IMR-90 (cell line): ENCODE measurements at regions of chr10 and their contacts with region 1.

Region 1: DNA sequence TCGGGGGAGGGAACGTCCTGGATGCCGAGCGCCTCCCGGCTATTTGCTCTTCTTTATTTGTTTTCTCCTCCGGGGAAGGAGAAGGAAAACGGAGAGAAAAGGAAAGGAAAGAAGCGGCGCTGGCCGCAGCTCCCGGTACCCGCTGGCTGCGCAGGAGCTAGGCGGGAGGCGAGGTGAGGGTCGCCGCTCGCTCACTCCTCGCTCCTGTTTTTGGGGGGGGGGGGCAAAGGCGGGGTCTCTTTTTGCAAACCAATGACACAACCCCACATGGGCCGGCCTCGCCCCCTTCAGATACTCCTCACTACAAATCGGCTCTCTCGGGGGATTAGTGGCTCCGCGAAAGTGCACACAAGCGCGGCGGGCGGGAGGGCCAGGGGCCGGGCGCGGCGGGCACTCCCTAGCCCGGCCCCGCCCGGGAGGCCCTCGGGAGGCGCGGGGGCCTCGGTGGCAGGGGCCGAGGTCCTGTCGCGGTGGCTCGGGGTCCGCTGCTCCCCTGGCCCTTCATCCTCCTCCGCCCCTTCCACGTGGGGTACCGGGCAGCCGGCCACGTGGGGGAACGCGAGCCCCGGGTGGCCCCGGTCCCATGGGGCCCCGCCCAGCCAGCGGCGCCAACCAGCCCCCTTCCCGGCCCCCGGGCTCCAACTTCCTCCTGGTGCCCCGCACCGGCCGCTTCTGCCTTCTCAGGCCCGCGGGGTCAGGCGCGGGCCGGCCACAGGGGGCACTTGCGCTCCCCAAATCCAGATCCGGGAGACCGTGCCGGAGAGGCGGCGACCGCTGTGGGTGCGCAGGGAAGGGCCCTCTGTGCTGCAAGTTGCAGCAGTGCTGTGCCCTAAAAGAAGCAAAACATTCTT is 718 bp upstream of the CTBP2 start:
- DNase-seq: peak; percentile 85
- ATAC-seq: peak; percentile 74
- H3K4me3 ChIP-seq: peak overlapping the region; percentile 98
- H3K27ac ChIP-seq: peak overlapping the region; percentile 84
- H3K4me1 ChIP-seq: peaks cover 7% of the 10 kb centered on the region; the same call in 1 of the 2 replicates
- H3K27me3 ChIP-seq: no peaks in the 10 kb centered on the region
- CTCF ChIP-seq: peak; percentile 47
- POLR2A ChIP-seq: peak; percentile 75; the same call in 1 of the 2 replicates
- RAD21 ChIP-seq: peak; percentile 58

Region 2: GRCh38 chr10:124763267-124763666 is 397.8 kb before region 1 on chr10:
- CTCF ChIA-PET with region 1: no interaction called
- POLR2A ChIA-PET with region 1: no interaction called
- dilution Hi-C with region 1: no loop called
- in situ Hi-C with region 1: no loop called
- intact Hi-C with region 1: no loop called
- DNase-seq: peak; percentile 48
- ATAC-seq: peak; percentile 44
- H3K4me3 ChIP-seq: no peak overlapping the region
- H3K27ac ChIP-seq: no peak overlapping the region
- H3K4me1 ChIP-seq: peaks cover 2% of the 10 kb centered on the region
- H3K27me3 ChIP-seq: no peaks in the 10 kb centered on the region
- CTCF ChIP-seq: no peak
- POLR2A ChIP-seq: no peak
- RAD21 ChIP-seq: no peak

Region 3: DNA sequence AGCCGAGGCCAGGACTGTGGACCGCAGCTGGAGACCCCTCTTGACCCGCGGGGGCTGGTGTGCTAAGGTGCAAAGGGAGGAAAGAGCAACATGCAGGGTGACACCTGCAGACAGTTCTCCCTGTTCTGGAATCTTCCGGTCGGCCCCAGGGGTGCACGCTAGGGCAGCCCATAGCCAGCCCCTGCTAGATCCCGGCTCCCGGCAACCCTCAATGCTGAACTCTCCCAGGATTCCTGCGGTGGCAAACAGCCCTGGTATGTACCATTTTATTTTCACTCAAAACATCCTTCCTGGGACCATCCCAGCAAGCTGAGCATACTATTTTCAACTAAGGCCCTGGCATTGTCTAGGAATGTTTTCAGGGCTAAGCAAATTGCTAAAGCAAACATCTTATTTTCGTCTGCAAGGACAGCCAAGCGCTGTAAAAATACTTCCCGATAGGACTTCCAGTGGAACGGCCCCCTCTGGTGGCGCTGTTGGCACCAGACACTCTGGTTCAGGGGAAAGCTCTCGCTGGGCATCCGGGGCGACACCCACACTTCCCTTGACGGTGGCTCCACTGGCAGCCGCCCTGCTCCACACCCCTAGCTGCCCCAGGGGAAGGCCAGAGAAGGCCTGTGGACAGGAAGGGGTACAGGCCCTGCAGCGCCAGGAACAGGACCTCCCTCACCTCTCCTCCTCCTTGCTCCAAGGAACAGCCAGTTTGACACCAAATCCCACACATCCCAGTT is 100.1 kb before region 1 on chr10:
- CTCF ChIA-PET with region 1: no interaction called
- POLR2A ChIA-PET with region 1: no interaction called
- dilution Hi-C with region 1: no loop called
- in situ Hi-C with region 1: loop called (anchors 10 kb)
- intact Hi-C with region 1: no loop called
- DNase-seq: peak; percentile 80
- ATAC-seq: peak; percentile 58
- H3K4me3 ChIP-seq: no peak overlapping the region
- H3K27ac ChIP-seq: peak overlapping the region; percentile 13; the same call in 1 of the 2 replicates
- H3K4me1 ChIP-seq: peaks cover 50% of the 10 kb centered on the region
- H3K27me3 ChIP-seq: no peaks in the 10 kb centered on the region
- CTCF ChIP-seq: peak; percentile 88
- POLR2A ChIP-seq: no peak
- RAD21 ChIP-seq: peak; percentile 84

Region 4: GRCh38 chr10:125123476-125124114 is 37.5 kb before region 1 on chr10:
- CTCF ChIA-PET with region 1: no interaction called
- POLR2A ChIA-PET with region 1: no interaction called
- dilution Hi-C with region 1: no loop called
- in situ Hi-C with region 1: no loop called
- intact Hi-C with region 1: no loop called
- DNase-seq: peak; percentile 69
- ATAC-seq: peak; percentile 79
- H3K4me3 ChIP-seq: no peak overlapping the region
- H3K27ac ChIP-seq: peak overlapping the region; percentile 64
- H3K4me1 ChIP-seq: peaks cover 33% of the 10 kb centered on the region
- H3K27me3 ChIP-seq: no peaks in the 10 kb centered on the region
- CTCF ChIP-seq: no peak
- POLR2A ChIP-seq: no peak
- RAD21 ChIP-seq: no peak

Region 5: GRCh38 chr10:125343118-125343925 is 182.2 kb after region 1 on chr10:
- CTCF ChIA-PET with region 1: no interaction called
- POLR2A ChIA-PET with region 1: no interaction called
- dilution Hi-C with region 1: no loop called
- in situ Hi-C with region 1: loop called (anchors 10 kb)
- intact Hi-C with region 1: loop called (anchors 2 kb)
- DNase-seq: peak; percentile 36
- ATAC-seq: peak; percentile 79
- H3K4me3 ChIP-seq: no peak overlapping the region
- H3K27ac ChIP-seq: no peak overlapping the region
- H3K4me1 ChIP-seq: peaks cover 3% of the 10 kb centered on the region; the same call in 1 of the 2 replicates
- H3K27me3 ChIP-seq: peaks cover 2% of the 10 kb centered on the region
- CTCF ChIP-seq: peak; percentile 54
- POLR2A ChIP-seq: no peak
- RAD21 ChIP-seq: peak; percentile 60

Region 6: DNA sequence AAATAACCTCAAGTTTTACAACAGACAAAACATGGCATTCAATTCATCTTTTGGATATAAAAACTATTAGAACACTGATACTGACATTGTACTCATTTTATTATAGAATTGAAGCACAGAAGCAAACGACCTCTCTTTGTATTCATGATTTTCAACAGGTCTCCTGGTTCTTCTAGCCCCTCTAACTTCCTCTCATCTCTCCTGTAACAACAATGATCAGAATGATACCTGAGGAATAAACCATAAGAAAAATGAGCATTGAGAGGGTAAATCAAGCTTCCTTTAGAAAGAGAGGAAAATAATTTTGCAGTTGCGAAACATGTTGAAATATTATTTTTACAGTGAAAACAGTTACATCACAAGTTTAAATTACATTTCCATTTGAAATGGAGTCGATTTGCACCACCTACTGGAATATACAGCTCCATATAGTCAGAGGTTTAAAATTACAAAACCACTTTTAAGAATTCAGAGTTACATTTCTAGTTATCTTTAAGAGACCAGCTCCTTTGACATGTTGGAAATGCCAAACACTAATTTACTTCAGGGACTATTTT is 539.4 kb after region 1 on chr10:
- CTCF ChIA-PET with region 1: no interaction called
- POLR2A ChIA-PET with region 1: no interaction called
- dilution Hi-C with region 1: no loop called
- in situ Hi-C with region 1: loop called (anchors 10 kb)
- intact Hi-C with region 1: loop called (anchors 2 kb)
- DNase-seq: peak; percentile 53
- ATAC-seq: peak; percentile 70
- H3K4me3 ChIP-seq: no peak overlapping the region
- H3K27ac ChIP-seq: no peak overlapping the region
- H3K4me1 ChIP-seq: no peaks in the 10 kb centered on the region; the same call in 1 of the 2 replicates
- H3K27me3 ChIP-seq: peaks cover 4% of the 10 kb centered on the region; the same call in 1 of the 2 replicates
- CTCF ChIP-seq: peak; percentile 43
- POLR2A ChIP-seq: no peak
- RAD21 ChIP-seq: peak; percentile 48

Region 7: DNA sequence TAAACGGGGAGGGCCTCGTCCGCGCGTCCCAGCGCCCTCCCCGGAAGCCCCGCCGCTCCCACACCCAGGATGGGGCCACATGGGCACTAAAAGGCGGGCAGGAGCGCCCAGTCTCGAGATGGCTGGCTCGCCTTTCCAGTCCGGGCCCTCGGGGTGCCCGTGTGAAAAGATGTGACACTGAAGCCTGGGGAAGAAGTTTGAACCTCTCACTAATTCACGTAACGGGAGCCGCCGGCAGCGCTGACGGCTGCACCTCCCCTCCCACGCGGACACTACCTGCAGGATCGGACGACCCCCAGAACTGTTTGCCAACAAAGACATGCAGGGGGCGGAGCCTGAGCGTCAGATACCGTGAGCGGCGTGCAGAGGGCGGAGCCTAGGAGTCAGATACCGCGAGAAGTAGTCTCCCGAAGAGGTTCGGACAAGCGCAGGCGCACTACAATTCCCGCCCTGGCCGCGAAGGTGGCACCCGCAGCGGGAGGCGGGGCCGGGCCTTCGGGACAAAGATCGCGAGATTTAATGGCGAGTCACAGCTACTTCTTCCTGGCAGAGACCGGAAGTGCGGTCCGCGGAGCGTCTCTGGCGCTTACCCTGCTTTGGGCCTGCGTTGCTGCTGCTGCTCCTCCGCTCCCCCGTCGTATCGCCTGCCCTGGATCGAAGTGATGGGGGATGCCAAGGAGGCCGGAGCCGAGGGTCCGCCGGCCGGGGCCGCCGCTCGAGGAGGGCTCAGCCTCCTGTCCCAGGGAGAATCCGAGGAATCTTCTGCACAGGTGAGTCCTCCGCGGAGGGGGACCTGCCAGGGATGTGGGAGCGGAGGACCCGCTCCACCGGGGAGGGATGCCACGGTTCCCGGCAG is 558.3 kb after region 1 on chr10 and contains the start of gene EDRF1:
- CTCF ChIA-PET with region 1: no interaction called
- POLR2A ChIA-PET with region 1: no interaction called
- dilution Hi-C with region 1: no loop called
- in situ Hi-C with region 1: no loop called
- intact Hi-C with region 1: loop called (anchors 1 kb)
- DNase-seq: peak; percentile 98
- ATAC-seq: peak; percentile 99
- H3K4me3 ChIP-seq: peak within 1 kb of the TSS; percentile 79
- H3K27ac ChIP-seq: peak within 1 kb of the TSS; percentile 83
- H3K4me1 ChIP-seq: no peaks in the 10 kb centered on the region; the same call in 1 of the 2 replicates
- H3K27me3 ChIP-seq: no peaks in the 10 kb centered on the region
- CTCF ChIP-seq: no peak
- POLR2A ChIP-seq: peak; percentile 91
- RAD21 ChIP-seq: peak; percentile 7; the same call in 1 of the 2 replicates
- total RNA-seq, gene EDRF1: 24.9 and 28.1 TPM in 2 replicates